ENCODE measurements at regions of chr2 and their contacts with region 1.

Region 1: DNA sequence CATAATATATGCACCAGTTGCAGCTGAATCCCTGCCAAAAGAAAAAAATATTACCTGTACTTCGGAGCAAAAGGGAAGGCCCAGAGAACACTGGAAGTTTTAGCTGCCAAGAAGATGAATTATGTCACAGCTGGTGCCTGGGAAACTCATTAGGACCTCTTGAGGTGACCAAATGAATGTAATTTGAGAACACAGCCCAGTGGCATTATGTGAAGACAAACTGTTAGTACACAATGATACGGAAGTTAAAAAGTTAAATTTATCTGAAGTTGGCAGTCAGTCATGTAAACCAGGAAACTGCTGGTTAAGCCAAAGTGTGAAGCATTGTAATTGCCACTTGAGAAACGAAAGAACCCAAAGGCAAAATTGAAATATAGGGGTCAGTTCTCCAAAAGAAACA is 80.7 kb downstream of the EML4 start:
- DNase-seq: no peak
- ATAC-seq: no peak
- H3K4me3 ChIP-seq: no peak overlapping the region
- H3K4me3 Mint-ChIP-seq: no peak overlapping the region
- H3K27ac ChIP-seq: no peak overlapping the region
- H3K27ac Mint-ChIP-seq: no peak overlapping the region
- H3K4me1 ChIP-seq: peaks cover 17% of the 10 kb centered on the region
- H3K4me1 Mint-ChIP-seq: peaks cover 90% of the 10 kb centered on the region
- H3K27me3 ChIP-seq: no peaks in the 10 kb centered on the region
- H3K27me3 Mint-ChIP-seq: no peaks in the 10 kb centered on the region
- CTCF ChIP-seq: no peak

Region 2: DNA sequence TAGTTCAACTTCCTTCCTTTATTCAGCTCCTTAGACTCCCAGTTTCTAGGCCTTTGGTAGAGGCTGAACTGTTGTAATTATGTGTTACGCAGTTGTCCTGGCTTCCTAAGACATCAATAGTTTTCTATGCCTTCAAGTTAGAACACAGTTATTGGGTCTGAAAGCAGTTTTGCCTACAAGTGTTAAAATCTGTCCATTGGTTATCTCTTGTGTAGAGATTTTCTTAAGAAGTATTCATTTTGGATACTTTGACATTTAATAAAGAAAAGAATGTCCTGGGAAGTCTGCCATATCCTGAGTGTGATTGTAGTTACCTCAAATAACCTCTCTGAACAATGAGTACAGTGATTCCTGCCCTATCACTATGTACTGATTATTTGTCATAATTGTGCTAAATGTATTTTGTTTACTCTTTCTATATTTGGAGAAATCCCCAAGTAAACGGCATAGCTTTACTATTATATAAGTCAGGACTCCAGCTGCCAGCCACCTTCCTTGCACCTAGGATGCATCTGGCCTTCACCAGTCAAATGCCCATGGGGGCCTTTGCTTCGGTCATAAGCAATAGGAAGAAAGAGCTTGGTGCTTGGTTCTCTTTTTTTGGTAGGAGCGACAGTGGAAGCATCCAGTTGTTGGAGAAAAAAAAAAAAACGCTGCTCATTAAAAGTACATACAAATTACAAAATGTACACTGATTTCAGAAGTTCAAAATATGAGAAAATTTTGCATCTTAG is 651.6 kb before region 1 on chr2:
- CTCF ChIA-PET with region 1: no interaction called
- POLR2A ChIA-PET with region 1: no interaction called
- intact Hi-C with region 1: no loop called
- DNase-seq: no peak
- ATAC-seq: no peak
- H3K4me3 ChIP-seq: no peak overlapping the region
- H3K4me3 Mint-ChIP-seq: no peak overlapping the region
- H3K27ac ChIP-seq: no peak overlapping the region
- H3K27ac Mint-ChIP-seq: no peak overlapping the region
- H3K4me1 ChIP-seq: no peaks in the 10 kb centered on the region
- H3K4me1 Mint-ChIP-seq: no peaks in the 10 kb centered on the region
- H3K27me3 ChIP-seq: no peaks in the 10 kb centered on the region
- H3K27me3 Mint-ChIP-seq: no peaks in the 10 kb centered on the region
- CTCF ChIP-seq: no peak

Region 3: GRCh38 chr2:42286268-42286946 is 36.5 kb after region 1 on chr2:
- CTCF ChIA-PET with region 1: interaction called, 3 read pairs
- POLR2A ChIA-PET with region 1: no interaction called
- intact Hi-C with region 1: loop called in 1 of 2 experiments (anchors 5 kb)
- DNase-seq: no peak
- ATAC-seq: no peak
- H3K4me3 ChIP-seq: no peak overlapping the region
- H3K4me3 Mint-ChIP-seq: no peak overlapping the region
- H3K27ac ChIP-seq: peak overlapping the region in 1 of 2 donors; percentile 24
- H3K27ac Mint-ChIP-seq: peak overlapping the region; percentile 66
- H3K4me1 ChIP-seq: peaks cover 4% of the 10 kb centered on the region
- H3K4me1 Mint-ChIP-seq: peaks cover 38% of the 10 kb centered on the region
- H3K27me3 ChIP-seq: no peaks in the 10 kb centered on the region
- H3K27me3 Mint-ChIP-seq: no peaks in the 10 kb centered on the region
- CTCF ChIP-seq: no peak

Measured in CD4-positive, alpha-beta T cell (primary cell).